ENCODE measurements at regions of chr2 and their contacts with region 1.

Region 1: GRCh38 chr2:99818842-99819241 is 323.5 kb downstream of the AFF3 start:
- DNase-seq: no peak
- ATAC-seq: peak; percentile 67 to 76 (median 68)
- H3K4me3 ChIP-seq: no peak overlapping the region
- H3K27ac ChIP-seq: no peak overlapping the region
- H3K4me1 ChIP-seq: no peaks in the 10 kb centered on the region
- H3K27me3 ChIP-seq: no peaks in the 10 kb centered on the region
- CTCF ChIP-seq: peak; percentile 46 to 71 (median 53)
- POLR2A ChIP-seq: no peak

Region 2: DNA sequence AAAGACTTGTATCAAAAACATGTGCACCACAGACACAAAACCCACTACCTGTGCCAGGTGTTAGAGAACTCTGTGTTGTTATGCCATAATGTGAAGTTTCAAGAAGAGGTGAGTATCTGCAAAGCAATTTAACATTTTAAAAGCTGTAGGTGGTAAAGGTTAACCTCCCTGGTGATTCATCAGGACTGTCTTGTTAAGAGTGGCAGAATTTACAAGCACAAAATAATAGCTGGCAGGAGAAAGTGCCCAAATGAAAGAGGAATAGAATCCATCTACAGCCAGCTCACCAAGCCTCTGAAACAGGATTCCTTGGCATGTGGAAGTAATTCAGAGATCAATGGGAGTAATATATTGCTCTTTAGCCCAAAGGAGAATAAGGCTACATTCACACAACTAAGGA is 92.9 kb after region 1 on chr2:
- intact Hi-C with region 1: no loop called
- DNase-seq: no peak
- ATAC-seq: peak in 1 of 4 donors; percentile 42
- H3K4me3 ChIP-seq: no peak overlapping the region
- H3K27ac ChIP-seq: no peak overlapping the region
- H3K4me1 ChIP-seq: peaks cover 0 to 11% (median 0%) of the 10 kb centered on the region in 4 donors
- H3K27me3 ChIP-seq: no peaks in the 10 kb centered on the region
- CTCF ChIP-seq: no peak
- POLR2A ChIP-seq: no peak

Region 3: DNA sequence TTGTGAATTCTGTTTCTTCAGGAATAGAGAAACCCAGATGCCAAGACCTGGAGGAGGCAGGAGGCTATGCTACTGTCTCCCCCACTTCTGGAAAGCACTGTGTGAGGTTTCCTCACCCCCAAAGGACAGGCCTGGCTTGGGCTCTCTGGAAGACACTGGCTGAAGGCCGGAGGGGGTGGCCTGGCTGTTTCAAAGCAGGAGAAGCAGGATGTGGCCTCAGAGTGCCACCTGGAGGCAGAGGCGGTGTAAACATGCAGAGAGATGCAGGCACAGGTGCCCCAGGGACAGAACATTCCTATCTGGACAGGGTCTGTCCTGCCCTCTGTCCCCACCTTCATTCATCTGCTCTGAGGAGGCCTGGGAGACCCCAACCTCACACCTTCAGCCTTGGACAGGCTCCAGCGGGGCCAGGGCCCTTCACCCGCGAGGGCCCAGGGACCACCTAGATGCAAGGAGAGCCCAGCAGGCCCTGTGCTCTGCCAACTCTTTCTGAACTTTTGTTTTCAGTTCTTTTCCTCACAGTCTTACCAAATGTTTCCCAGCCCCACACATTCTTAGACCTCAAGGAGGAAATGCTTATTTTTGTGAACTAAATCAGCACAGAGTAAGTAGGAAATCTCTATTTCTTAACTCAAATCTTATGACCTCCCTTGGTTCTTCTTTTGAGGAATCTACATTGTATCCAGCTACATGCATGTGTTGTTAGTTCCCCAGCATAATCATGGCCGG is 424.2 kb after region 1 on chr2:
- intact Hi-C with region 1: loop called (anchors 10 kb)
- DNase-seq: peak; percentile 72 to 80 (median 77)
- ATAC-seq: peak; percentile 92 to 95 (median 94)
- H3K4me3 ChIP-seq: no peak overlapping the region
- H3K27ac ChIP-seq: no peak overlapping the region
- H3K4me1 ChIP-seq: peaks cover 0 to 4% (median 0%) of the 10 kb centered on the region in 4 donors
- H3K27me3 ChIP-seq: no peaks in the 10 kb centered on the region
- CTCF ChIP-seq: peak; percentile 74 to 89 (median 86)
- POLR2A ChIP-seq: no peak

Measured in right lobe of liver (tissue), 6 donors.